Breast epithelium (tissue), 4 donors: ENCODE measurements at regions of chr14 and their contacts with region 1.

Region 1: GRCh38 chr14:99077076-99077843 is 194.7 kb downstream of the BCL11B start:
- DNase-seq: no peak
- H3K4me3 ChIP-seq: no peak overlapping the region
- H3K27ac ChIP-seq: no peak overlapping the region
- H3K4me1 ChIP-seq: no peaks in the 10 kb centered on the region
- H3K27me3 ChIP-seq: no peaks in the 10 kb centered on the region
- CTCF ChIP-seq: no peak
- POLR2A ChIP-seq: no peak

Region 2: DNA sequence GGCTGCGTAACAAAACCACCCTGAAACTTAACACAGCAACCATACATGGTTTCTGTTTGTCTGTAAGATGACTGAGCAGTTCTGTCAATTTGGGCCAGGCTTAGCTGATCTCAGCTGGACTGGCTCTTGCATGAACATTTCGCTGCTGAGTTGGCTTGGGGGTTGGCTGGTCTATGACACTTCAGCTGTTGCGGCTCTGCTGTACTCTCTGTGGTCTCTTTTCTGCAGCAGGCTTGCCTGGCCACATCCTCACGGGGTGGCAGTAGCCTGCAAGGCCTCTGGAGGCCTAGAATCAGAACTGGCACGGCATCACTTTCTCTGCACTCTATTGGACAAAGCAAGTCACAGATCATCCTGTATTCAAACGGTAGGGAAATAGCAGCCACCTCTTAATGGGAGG is 21.4 kb before region 1 on chr14:
- intact Hi-C with region 1: loop called (anchors 1 kb)
- DNase-seq: no peak
- H3K4me3 ChIP-seq: no peak overlapping the region
- H3K27ac ChIP-seq: no peak overlapping the region
- H3K4me1 ChIP-seq: no peaks in the 10 kb centered on the region
- H3K27me3 ChIP-seq: no peaks in the 10 kb centered on the region
- CTCF ChIP-seq: no peak
- POLR2A ChIP-seq: no peak

Region 3: DNA sequence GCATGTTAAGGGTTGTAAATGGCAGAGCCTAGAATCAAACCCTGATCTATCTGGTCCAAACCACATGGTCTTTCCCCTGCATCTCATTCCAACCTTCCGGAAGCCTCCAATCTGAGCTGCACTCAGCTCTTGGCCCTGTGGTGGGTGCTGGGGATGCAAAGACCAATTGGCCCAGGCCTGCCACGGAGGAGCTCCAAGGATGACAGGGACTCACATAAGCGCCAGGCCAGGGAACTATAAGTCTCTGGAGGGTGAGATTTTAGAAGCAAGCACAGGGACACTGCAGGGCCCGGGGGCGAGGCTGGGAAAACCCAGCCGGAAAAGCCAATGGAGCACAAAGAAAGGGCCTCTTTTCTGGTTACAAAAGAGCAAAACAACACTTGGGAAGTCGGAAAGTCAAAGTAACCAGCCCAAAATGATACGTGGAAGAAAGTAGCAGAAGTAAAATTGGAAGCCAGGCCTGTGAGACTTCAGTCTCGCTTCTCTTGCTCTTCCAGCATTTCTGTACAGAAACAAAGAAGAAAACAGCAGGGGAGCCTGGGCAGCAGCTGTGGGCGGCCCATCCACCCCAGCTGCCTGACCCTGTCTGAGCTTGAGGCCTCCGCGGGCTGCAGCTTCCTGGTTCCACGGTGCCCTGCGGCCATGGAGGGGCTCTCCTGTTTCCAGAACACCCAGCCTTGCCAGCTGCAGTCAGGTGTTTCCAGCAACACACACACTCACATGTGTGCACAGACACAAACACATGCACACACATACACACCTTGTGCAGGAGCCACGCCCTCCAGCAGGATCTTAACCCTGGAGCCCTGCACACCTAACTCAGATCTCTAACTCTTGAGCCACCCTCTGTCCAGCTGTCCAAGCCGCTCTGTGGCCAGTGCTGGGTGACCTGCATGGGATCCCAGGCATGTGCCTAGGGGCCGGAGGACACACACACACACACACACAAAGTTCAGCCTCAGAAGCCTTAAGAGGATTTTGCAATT is 16.6 kb after region 1 on chr14:
- intact Hi-C with region 1: no loop called
- DNase-seq: no peak
- H3K4me3 ChIP-seq: no peak overlapping the region
- H3K27ac ChIP-seq: peak overlapping the region; percentile 31 to 32
- H3K4me1 ChIP-seq: no peaks in the 10 kb centered on the region
- H3K27me3 ChIP-seq: no peaks in the 10 kb centered on the region
- CTCF ChIP-seq: no peak
- POLR2A ChIP-seq: no peak